Activated CD4-positive, alpha-beta memory T cell treated with anti-CD3 and anti-CD28 coated beads for 36 hours (primary cell): ENCODE measurements at regions of chr7 and their contacts with region 1.

Region 1: DNA sequence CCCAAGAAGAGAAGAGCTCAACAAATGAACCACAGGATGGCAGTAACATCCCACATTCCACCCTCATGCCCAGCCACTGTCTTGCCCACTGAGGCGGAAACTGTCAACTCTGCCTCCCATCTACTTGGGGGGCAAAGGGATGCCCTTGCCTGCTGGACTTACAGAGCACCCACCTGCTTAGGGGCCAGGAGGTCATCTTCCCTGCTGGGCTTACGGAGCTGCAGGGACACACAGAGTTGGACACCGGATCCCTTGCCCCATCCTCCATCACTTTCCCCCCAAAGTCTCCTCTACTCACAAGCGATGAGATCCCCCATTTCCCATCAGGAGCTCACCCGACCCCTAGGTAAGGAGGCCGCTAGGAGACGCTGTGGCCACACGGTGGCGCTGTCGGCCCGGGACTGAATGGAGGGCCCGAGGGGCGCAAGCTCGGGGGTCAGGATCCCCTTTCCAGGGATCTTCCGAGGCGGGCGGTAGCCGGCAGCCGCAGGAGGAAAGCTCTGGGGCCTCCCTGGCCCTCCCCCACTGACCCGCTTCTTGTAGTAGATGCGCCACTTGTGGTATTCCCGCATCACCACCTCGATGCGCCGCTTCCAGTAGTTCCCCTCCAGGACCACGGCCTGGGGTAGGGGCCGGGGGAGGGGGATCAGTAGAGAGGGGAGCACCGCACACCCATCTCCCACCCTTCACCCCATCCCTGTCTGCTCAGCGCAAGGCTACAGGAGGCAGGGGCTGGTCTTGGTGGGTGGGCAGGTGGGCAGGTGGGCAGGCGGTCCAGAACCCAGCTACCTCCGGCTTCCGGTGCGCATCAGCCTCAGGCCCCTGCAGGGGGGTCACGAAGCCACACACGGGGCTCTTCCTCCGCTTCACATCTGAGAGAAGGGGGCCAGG is 17.3 kb downstream of the MLXIPL start:
- DNase-seq: peak; percentile 64
- H3K4me3 Mint-ChIP-seq: no peak overlapping the region
- H3K27ac Mint-ChIP-seq: no peak overlapping the region
- H3K4me1 Mint-ChIP-seq: no peaks in the 10 kb centered on the region
- H3K27me3 Mint-ChIP-seq: peaks cover 19% of the 10 kb centered on the region

Region 2: DNA sequence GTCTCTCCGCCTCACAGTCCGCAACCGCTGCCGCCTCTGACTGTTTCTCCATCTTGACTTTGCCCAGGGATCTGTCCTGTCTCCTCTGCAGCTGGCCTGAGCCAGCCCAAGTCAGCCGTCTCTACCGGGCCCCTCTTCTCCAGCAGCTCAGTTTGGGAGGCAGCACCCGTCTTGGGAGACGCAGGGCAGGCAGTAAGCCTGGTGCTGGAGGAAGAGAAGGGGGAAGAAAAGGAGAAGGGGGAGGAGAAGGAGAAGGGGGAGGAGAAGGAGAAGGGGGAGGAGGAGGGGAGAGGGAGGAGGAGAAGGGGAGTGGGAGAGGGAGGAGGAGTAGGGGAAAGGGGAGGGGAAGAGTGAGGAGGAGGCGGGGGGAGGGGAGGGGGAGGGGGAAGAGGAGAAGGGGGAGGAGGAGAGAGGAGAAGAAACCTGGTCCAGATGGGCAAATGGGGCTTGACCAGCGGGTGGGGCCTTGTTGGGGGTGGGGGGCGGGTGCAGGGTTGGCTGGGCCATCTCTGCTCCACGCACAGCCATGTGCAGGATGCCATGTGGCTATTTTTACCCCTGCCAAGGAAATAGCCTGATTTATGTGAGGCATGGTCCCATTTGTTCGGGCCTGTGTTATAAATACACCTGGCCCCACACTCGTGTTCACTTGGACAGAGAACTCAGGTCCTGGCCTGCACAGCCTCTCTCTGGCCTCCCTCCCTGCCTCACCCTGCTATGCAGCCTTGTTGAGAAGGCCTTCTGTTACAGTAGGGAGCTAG is 209.3 kb before region 1 on chr7:
- CTCF ChIA-PET with region 1: no interaction called
- POLR2A ChIA-PET with region 1: no interaction called
- intact Hi-C with region 1: no loop called
- DNase-seq: no peak
- H3K4me3 Mint-ChIP-seq: no peak overlapping the region
- H3K27ac Mint-ChIP-seq: no peak overlapping the region
- H3K4me1 Mint-ChIP-seq: peaks cover 2% of the 10 kb centered on the region
- H3K27me3 Mint-ChIP-seq: peaks cover 5% of the 10 kb centered on the region

Region 3: GRCh38 chr7:73578342-73579127 is 28.5 kb before region 1 on chr7 and contains the start of gene TBL2:
- CTCF ChIA-PET with region 1: interaction called, 11 read pairs
- POLR2A ChIA-PET with region 1: no interaction called
- intact Hi-C with region 1: no loop called
- DNase-seq: peak; percentile 99
- H3K4me3 Mint-ChIP-seq: peak within 1 kb of the TSS; percentile 90
- H3K27ac Mint-ChIP-seq: peak within 1 kb of the TSS; percentile 95
- H3K4me1 Mint-ChIP-seq: peaks cover 22% of the 10 kb centered on the region
- H3K27me3 Mint-ChIP-seq: no peaks in the 10 kb centered on the region
- total RNA-seq, gene TBL2: 23.0 to 25.3 TPM

Region 4: DNA sequence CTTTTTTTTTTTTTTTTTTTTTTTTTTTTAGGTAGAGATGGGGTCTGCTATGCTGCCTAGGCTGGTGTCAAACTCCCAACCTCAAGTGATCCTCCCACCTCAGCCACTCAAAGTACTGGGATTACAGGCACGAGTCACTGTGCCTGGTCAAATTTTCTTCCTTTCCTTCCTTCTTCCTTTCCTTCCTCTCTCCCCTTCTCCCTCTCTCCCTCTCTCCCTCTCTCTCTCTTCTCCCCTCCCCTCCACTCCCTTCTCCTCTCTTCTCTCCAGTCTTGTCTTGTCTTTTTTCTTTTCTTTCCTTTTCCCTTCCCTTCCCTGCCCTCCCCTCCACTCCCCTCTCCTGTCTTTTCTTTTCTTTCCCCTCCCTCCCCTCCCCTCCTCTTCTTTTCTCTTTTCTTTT is 24.5 kb after region 1 on chr7:
- CTCF ChIA-PET with region 1: interaction called, 13 read pairs
- POLR2A ChIA-PET with region 1: no interaction called
- intact Hi-C with region 1: no loop called
- DNase-seq: no peak
- H3K4me3 Mint-ChIP-seq: no peak overlapping the region
- H3K27ac Mint-ChIP-seq: no peak overlapping the region
- H3K4me1 Mint-ChIP-seq: no peaks in the 10 kb centered on the region
- H3K27me3 Mint-ChIP-seq: peaks cover 44% of the 10 kb centered on the region

Region 5: DNA sequence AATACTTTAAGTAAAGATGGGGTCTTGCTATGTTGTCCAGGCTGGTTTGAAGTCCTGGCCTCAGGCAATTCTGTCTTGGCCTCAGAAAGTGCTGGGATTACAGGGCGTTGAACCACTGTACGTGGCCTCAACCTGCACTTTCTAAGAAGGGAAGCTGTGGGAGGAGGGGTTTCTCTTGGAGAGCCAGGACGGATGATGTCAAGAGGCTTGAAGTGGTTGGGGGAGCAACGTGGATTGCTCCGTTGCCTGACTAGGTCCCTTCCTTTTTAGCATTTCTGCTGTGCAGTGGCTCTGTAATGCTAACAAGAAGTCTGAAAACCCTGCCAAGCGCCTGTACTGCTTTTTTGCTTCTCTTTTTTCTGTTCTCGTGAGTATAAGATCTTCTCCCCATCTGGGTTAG is 83.6 kb after region 1 on chr7:
- CTCF ChIA-PET with region 1: interaction called, 12 read pairs
- POLR2A ChIA-PET with region 1: no interaction called
- intact Hi-C with region 1: no loop called
- DNase-seq: no peak
- H3K4me3 Mint-ChIP-seq: no peak overlapping the region
- H3K27ac Mint-ChIP-seq: no peak overlapping the region
- H3K4me1 Mint-ChIP-seq: peaks cover 16% of the 10 kb centered on the region
- H3K27me3 Mint-ChIP-seq: no peaks in the 10 kb centered on the region

Region 6: DNA sequence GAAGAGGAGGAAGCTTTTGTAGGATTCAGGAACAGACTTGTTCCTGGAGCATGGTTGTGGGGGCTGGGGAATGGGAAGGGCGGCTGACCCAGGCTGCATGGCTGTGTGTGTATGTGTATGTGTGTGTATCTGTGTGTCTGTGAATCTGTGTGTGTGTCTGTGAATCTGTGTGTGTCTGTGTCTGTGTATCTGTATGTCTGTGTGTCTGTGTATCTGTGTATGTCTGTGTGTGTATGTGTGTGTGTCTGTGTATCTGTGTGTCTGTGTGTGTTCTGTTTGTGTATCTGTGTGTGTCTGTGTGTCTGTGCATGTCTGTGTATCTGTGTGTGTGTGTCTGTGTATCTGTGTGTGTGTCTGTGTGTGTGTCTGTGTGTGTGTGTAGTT is 119.0 kb after region 1 on chr7:
- CTCF ChIA-PET with region 1: interaction called, 109 read pairs
- POLR2A ChIA-PET with region 1: no interaction called
- intact Hi-C with region 1: loop called (anchors 1 kb)
- DNase-seq: no peak
- H3K4me3 Mint-ChIP-seq: no peak overlapping the region
- H3K27ac Mint-ChIP-seq: no peak overlapping the region
- H3K4me1 Mint-ChIP-seq: no peaks in the 10 kb centered on the region
- H3K27me3 Mint-ChIP-seq: peaks cover 5% of the 10 kb centered on the region

Region 7: GRCh38 chr7:73851410-73852234 is 244.6 kb after region 1 on chr7:
- CTCF ChIA-PET with region 1: interaction called, 6 read pairs
- POLR2A ChIA-PET with region 1: no interaction called
- intact Hi-C with region 1: loop called (anchors 5 kb)
- DNase-seq: peak; percentile 55
- H3K4me3 Mint-ChIP-seq: no peak overlapping the region
- H3K27ac Mint-ChIP-seq: peak overlapping the region; percentile 45
- H3K4me1 Mint-ChIP-seq: peaks cover 30% of the 10 kb centered on the region
- H3K27me3 Mint-ChIP-seq: peaks cover 12% of the 10 kb centered on the region

Region 8: DNA sequence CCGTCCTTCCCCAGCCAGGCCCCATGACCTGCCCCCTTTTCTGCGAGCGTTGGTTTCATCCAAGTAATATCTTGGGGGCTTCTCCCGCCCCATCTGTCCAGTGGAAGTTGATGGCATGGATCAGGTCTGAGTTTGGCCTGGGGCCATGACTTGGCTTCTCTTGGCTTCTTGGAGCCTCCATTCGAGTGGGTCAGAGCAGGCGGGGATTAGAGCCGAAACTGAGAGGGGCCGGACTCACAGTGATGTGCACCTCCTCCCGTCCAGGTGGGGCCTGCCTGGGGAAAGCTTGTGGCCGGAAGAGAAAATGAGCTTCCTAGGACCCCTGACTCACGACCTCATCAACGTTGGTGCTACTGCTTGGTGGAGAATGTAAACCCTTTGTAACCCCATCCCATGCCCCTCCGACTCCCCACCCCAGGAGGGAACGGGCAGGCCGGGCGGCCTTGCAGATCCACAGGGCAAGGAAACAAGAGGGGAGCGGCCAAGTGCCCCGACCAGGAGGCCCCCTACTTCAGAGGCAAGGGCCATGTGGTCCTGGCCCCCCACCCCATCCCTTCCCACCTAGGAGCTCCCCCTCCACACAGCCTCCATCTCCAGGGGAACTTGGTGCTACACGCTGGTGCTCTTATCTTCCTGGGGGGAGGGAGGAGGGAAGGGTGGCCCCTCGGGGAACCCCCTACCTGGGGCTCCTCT is 461.5 kb after region 1 on chr7:
- CTCF ChIA-PET with region 1: no interaction called
- POLR2A ChIA-PET with region 1: no interaction called
- intact Hi-C with region 1: no loop called
- DNase-seq: no peak
- H3K4me3 Mint-ChIP-seq: no peak overlapping the region
- H3K27ac Mint-ChIP-seq: no peak overlapping the region
- H3K4me1 Mint-ChIP-seq: no peaks in the 10 kb centered on the region
- H3K27me3 Mint-ChIP-seq: no peaks in the 10 kb centered on the region